GM23248 (cell line): ENCODE measurements at regions of chr1 and their contacts with region 1.

Region 1: DNA sequence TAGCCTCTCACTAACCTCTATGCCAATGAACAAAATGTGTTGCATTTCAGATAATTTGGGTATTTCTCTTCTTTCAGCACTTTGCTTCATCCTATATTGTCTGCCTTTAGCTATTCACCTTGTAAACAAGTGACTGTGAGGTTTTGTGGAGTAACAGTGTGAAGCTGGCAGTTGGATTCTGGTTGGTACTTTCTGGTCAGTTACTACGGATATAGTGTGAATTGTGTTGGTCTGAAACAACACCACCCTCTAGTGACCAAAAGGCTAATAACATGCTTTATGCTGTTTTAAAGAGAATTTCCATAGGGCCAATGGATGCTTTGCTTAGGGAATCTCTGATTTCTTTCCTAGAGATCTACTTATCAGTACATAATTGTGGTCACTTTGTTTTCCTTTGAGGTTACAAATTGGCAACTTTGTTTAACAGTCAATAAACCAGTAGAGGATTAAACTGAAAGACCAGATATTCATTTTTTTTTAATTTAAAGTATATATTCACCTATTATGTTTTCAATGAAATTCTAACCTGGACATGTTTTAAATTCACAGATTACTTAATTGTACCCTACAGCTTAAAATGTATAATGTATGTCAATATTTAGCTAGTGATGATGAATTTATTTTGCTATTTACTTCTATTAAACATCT is 2.5 kb upstream of the PTGER3 start:
- DNase-seq: peak; percentile 75
- H3K4me3 ChIP-seq: no peak overlapping the region
- H3K27ac ChIP-seq: no peak overlapping the region
- H3K4me1 ChIP-seq: no peaks in the 10 kb centered on the region
- H3K27me3 ChIP-seq: peaks cover 22% of the 10 kb centered on the region; the same call in 1 of the 2 replicates

Region 2: DNA sequence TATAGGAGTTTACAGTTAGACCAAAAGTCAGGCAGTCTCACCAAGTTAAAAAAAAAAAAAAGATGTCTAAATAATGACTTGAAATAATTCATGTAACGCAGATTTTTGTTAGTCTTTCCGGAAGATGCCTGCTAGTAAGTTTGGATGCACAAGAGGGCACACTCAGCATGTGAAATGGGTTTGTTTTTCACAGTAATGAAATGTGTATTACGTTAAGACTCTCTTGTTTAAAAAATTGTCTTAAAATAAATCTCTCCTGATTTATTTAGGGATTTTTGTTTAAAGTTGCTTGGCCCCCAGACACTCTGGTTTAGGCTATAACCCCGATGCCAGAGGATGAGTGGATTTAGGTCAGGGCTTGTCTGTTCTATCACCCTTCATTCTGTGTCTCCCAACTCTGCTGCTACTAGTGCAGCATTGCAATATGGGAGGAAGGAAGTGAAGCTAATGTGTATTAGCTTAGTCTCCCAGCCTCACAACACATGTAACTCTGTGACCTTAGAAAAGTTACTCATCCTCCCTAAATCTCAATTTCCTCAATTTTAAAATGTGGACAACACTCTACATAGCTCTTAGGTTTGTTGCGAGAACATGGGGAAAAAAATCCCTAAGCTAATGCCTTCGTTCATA is 613.3 kb before region 1 on chr1:
- in situ Hi-C with region 1: loop called (anchors 10 kb)
- DNase-seq: peak; percentile 61
- H3K4me3 ChIP-seq: no peak overlapping the region
- H3K27ac ChIP-seq: no peak overlapping the region
- H3K4me1 ChIP-seq: no peaks in the 10 kb centered on the region
- H3K27me3 ChIP-seq: no peaks in the 10 kb centered on the region

Region 3: DNA sequence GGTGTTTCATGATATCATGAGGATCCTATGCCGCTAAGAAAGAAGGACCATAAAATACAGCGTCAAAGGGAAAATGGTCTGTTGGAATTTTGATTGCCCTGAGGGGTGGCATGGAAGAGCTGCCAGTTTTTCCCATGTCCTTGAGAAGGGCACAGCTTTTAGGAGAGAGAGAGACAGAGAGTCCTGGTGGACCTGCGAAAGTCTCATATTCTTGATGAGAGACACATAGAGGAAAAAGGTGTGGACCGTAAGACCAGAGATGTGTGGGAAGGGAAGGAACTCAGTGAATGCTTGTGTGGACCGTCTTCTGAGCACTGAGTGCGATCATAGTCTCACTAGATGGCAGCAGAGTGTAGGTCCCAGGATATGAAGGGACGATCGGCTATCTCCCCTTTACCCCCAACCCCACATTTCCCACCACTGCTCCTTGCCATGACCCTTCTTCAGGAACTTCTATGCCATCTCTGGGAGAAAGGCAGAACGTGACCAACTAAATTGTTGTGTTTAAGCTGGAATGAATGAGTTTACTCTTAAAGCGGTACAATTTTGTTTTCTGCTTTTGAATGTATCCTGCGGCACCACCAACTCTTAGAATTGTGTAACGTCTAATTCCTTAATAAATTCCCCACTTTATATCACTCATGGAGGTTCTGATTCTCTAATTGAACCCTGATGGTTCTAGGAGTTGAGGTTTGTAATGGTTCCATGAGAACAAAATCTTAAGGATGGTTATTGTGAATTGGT is 521.3 kb before region 1 on chr1:
- in situ Hi-C with region 1: loop called (anchors 5 kb)
- DNase-seq: peak; percentile 59
- H3K4me3 ChIP-seq: no peak overlapping the region
- H3K27ac ChIP-seq: no peak overlapping the region
- H3K4me1 ChIP-seq: no peaks in the 10 kb centered on the region
- H3K27me3 ChIP-seq: no peaks in the 10 kb centered on the region

Region 4: GRCh38 chr1:70627910-70628309 is 422.2 kb before region 1 on chr1:
- in situ Hi-C with region 1: no loop called
- DNase-seq: peak; percentile 1
- H3K4me3 ChIP-seq: no peak overlapping the region
- H3K27ac ChIP-seq: no peak overlapping the region
- H3K4me1 ChIP-seq: no peaks in the 10 kb centered on the region
- H3K27me3 ChIP-seq: no peaks in the 10 kb centered on the region

Region 5: DNA sequence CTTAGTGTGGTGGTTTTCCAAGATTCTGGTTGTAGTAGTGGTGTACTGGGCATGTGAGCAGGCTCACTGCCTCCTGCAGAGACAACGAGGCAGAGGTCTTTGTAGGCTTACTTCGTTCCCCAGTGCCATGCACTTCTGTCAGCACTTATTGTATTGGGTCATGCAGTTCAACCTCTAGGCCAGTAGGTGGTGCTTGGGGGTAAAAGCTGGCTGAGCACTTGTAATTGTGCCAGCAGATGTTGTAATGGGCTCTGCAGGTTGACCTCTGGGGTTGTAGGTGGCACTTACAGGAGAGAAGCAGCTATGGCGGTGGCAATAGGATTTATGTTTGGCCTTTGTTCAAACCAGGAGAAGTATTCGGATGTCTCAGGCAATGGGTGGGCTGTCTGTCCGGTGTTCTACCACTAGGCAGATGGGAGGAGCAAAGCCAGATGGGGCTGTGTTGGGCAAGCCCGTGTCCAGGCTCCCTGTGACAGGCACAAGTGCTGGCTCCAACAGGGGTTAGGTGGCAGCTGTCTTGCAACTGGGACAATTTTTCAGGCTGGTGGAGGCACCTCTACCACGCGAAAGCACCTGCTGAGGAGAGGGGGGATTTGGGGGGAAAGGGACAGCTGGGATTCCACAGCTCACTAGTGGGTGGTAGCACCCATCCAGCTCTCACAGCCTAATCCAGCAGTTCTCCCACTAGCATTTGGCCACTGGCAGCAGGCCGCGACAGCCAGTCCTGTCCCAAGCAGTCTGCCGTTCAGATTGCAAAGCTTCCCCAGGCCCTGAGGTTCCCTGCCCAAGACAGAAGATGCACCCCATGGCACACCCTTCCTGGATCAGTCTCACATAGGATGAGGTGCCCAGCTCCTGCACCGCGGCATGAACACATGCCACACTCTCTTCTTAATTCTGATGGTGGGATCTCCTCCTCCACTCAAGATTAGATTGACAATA is 364.5 kb before region 1 on chr1:
- in situ Hi-C with region 1: loop called (anchors 10 kb)
- DNase-seq: peak; percentile 77
- H3K4me3 ChIP-seq: no peak overlapping the region
- H3K27ac ChIP-seq: no peak overlapping the region
- H3K4me1 ChIP-seq: no peaks in the 10 kb centered on the region
- H3K27me3 ChIP-seq: 0 out of 2 replicates have a peak, but pooled peaks cover 4% of the 10 kb centered on the region

Region 6: DNA sequence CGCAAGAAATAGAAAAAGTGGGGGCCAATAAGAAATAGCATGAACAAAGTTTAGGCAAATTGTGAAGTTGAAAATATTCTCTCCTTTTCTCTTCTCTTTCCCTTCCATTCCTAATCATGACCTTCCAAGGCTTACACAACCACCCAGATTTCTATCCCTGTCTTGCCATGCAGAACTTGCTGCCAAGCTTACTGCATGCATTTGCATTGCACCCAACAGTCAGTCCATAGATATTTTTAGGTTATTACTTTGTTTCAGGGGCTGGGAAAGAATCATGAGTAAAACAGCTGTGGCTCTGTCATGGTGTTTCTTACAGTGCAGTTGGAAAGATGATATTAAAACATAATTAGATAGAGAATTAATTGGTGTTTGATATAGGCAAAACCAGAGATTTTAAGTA is 221.9 kb before region 1 on chr1:
- in situ Hi-C with region 1: no loop called
- DNase-seq: no peak
- H3K4me3 ChIP-seq: no peak overlapping the region
- H3K27ac ChIP-seq: no peak overlapping the region
- H3K4me1 ChIP-seq: no peaks in the 10 kb centered on the region
- H3K27me3 ChIP-seq: no peaks in the 10 kb centered on the region; the same call in 1 of the 2 replicates